ENCODE measurements at regions of chr20 and their contacts with region 1.

Region 1: DNA sequence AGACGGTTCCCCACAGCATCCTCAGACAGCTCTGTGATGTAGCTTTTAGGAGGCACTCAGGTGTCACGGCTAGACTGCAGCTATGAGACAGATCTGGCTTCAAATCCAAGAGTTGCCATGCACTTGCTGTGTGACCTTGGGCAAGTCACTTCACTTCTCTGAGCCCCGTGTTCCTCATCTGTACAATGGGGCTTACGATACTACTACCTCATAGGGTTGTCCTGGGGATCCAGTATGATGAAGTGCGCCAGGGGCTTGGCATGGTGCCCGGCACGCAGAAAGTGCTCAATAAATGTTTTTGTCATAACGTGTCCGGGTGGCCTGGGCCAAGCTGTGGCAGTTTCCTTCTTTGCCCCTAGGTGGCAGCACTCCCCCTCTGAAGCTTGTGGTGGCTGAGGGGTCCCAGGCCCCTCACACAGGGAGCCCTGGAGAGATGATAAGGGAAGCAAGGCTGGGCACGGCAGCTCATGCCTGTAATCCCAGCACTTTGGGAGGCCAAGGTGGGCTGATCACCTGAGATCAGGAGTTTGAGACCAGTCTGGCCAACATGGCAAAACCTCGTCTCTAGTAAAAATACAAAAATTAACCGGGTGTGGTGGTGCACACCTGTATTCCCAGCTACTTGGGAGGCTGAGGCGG is 19.1 kb upstream of the CHMP4B start:
- DNase-seq: peak; percentile 86
- H3K4me3 Mint-ChIP-seq: no peak overlapping the region
- H3K27ac Mint-ChIP-seq: peak overlapping the region; percentile 78
- H3K4me1 Mint-ChIP-seq: peaks cover 88% of the 10 kb centered on the region
- H3K27me3 Mint-ChIP-seq: no peaks in the 10 kb centered on the region
- CTCF ChIP-seq: peak; percentile 99

Region 2: DNA sequence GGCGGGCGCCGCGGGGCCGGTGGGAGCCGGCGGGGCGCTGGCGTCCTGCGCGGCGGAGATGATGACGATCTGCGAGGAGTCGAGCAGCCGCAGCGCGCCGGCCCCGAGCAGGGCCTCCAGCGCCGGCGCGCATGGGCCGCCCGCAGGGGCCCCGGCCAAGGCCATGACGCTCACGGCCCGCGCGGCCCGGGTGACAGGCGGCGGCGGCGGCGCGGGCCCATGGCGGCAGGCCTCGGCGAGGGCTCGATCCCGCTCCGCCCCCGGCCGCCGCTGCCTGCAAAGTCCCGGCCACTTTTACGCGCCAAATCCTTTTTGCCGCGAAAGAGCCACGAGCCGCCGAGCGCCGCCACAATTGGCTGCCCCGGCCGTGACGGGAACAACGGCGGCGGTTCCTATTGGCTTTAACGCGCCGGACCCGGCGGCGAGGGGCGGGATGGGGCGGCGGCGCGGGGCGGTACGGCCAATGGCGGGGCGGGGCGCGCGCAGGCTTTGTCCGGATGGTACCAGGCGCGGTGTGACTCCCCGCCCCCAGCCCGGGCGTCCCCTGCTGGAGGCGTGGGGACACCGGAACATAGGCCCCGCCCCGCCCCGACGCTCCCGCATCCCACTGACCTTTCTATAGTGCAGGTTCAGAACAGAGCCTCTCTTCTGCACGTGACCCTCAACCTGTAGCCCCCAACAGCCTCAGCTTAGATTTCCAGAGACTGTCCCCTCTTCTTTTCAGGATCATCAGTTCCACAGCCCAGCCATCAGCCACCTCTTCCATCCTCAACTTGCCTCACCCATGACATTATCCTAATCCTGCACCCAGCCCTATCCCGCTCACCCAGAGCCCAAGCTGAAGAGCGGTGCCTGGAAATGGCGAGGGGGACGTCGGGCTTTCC is 105.7 kb before region 1 on chr20 and contains the start of gene E2F1:
- CTCF ChIA-PET with region 1: no interaction called
- intact Hi-C with region 1: loop called (anchors 5 kb)
- DNase-seq: peak; percentile 100
- H3K4me3 Mint-ChIP-seq: peak within 1 kb of the TSS; percentile 62
- H3K27ac Mint-ChIP-seq: peak within 1 kb of the TSS; percentile 69
- H3K4me1 Mint-ChIP-seq: peaks cover 44% of the 10 kb centered on the region
- H3K27me3 Mint-ChIP-seq: no peaks in the 10 kb centered on the region
- CTCF ChIP-seq: no peak
- total RNA-seq, gene E2F1: 56.9 and 62.3 TPM in 2 replicates

Region 3: GRCh38 chr20:33731693-33732165 is 60.3 kb before region 1 on chr20 and contains the start of gene ZNF341:
- CTCF ChIA-PET with region 1: interaction called, 13 read pairs
- intact Hi-C with region 1: loop called (anchors 2 kb)
- DNase-seq: no peak
- H3K4me3 Mint-ChIP-seq: peak within 1 kb of the TSS; percentile 78
- H3K27ac Mint-ChIP-seq: peak within 1 kb of the TSS; percentile 76
- H3K4me1 Mint-ChIP-seq: peaks cover 38% of the 10 kb centered on the region
- H3K27me3 Mint-ChIP-seq: no peaks in the 10 kb centered on the region
- CTCF ChIP-seq: peak; percentile 95
- total RNA-seq, gene ZNF341: 10.2 and 12.9 TPM in 2 replicates

Region 4: GRCh38 chr20:33773412-33774089 is 18.5 kb before region 1 on chr20:
- CTCF ChIA-PET with region 1: interaction called, 14 read pairs
- intact Hi-C with region 1: no loop called
- DNase-seq: no peak
- H3K4me3 Mint-ChIP-seq: no peak overlapping the region
- H3K27ac Mint-ChIP-seq: no peak overlapping the region
- H3K4me1 Mint-ChIP-seq: peaks cover 25% of the 10 kb centered on the region
- H3K27me3 Mint-ChIP-seq: no peaks in the 10 kb centered on the region
- CTCF ChIP-seq: no peak

Region 5: GRCh38 chr20:33832103-33832804 is 40.2 kb after region 1 on chr20:
- CTCF ChIA-PET with region 1: interaction called, 3 read pairs
- intact Hi-C with region 1: loop called (anchors 2 kb)
- DNase-seq: no peak
- H3K4me3 Mint-ChIP-seq: no peak overlapping the region
- H3K27ac Mint-ChIP-seq: no peak overlapping the region
- H3K4me1 Mint-ChIP-seq: peaks cover 83% of the 10 kb centered on the region
- H3K27me3 Mint-ChIP-seq: no peaks in the 10 kb centered on the region
- CTCF ChIP-seq: no peak

Region 6: DNA sequence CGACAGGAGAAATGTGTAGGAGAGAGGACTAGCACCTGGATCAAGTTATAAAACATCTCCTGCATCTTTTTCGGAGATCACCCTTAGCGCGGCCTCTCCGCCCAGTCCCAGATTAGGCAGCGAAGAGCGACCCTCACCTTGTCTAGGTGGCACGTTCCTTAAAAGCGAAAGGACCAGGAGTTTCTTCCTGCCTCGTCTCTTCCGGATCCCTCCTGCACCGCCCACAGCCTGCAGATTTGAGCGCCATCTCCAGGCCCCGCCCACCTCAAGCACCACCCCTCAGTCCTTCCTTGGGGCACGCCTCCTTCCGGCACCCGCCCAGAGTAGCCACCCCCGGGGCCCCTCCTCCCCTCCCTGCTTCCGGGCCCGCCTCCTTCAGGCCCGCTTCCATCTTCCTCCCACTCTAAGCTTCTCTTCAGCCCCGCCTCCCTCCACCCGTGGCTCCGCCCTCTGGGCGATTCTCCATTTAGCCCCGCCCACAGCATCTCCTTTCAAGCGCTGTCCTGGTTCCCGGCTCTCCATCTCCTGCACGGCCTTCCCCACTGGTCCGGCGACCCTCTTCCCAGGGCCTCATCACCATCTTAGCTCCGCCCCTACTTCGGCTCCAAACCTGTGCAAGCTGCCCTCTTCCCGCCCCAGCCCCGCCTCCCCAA is 201.0 kb after region 1 on chr20:
- CTCF ChIA-PET with region 1: interaction called, 6 read pairs
- intact Hi-C with region 1: loop called (anchors 5 kb)
- DNase-seq: peak; percentile 100
- H3K4me3 Mint-ChIP-seq: peak overlapping the region; percentile 82
- H3K27ac Mint-ChIP-seq: peak overlapping the region; percentile 82
- H3K4me1 Mint-ChIP-seq: peaks cover 42% of the 10 kb centered on the region
- H3K27me3 Mint-ChIP-seq: no peaks in the 10 kb centered on the region
- CTCF ChIP-seq: no peak